Activated CD4-positive, alpha-beta T cell treated with anti-CD3 and anti-CD28 coated beads, Interleukin-2, amount 10 ng/mL, durations not matched to agents 7 days and 5 days (primary cell): ENCODE measurements at regions of chr18 and their contacts with region 1.

Region 1: DNA sequence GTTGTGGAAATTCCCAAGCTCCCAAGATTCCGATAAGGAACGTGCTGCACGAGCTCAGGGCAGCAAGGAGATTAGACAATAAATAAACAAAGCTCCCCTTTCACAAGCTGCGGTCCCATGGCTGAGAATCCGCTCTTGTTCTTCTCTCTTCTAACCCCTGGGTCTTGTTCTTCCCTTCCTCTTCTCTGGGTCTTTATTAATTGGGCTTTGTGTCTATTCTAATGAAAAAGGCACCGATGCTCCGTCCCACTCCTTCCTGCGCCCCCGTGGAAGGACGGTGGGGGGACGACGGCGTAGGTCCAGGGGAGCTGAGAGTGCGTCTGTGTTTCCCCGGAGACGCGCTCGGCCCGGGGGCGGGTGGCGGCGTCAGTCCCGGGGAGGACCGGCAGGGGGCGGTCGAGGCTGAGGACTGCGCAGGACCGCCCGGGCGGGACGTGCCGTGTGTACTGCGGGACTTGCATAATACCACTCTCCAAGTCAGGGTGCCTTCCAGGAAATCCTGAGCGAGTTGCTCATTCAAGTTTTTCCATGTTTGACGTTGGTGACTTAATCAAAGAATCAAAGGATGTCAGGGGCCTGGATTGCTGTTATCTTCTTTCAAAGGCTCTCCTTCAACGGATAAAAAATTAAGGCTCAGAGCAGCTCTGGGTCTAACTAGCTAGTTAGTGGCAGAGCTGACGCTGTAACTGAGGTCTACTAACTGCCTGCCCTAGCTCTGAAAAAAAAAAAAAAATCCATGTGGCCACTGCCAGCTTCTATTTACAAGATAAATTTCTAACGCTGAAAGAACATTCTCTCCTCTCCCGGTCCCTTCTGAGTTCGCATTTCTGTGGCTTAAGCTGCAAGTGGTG is 321.4 kb downstream of the TGIF1 start:
- DNase-seq: peak; percentile 75
- H3K4me3 Mint-ChIP-seq: peak overlapping the region; percentile 38
- H3K27ac Mint-ChIP-seq: peak overlapping the region; percentile 37
- H3K4me1 Mint-ChIP-seq: peaks cover 12% of the 10 kb centered on the region
- H3K27me3 Mint-ChIP-seq: peaks cover 40% of the 10 kb centered on the region

Region 2: GRCh38 chr18:3995476-3996102 is 224.2 kb after region 1 on chr18:
- CTCF ChIA-PET with region 1: interaction called, 13 read pairs
- POLR2A ChIA-PET with region 1: no interaction called
- DNase-seq: peak; percentile 75
- H3K4me3 Mint-ChIP-seq: no peak overlapping the region
- H3K27ac Mint-ChIP-seq: no peak overlapping the region
- H3K4me1 Mint-ChIP-seq: peaks cover 4% of the 10 kb centered on the region
- H3K27me3 Mint-ChIP-seq: peaks cover 12% of the 10 kb centered on the region